Naive thymus-derived CD4-positive, alpha-beta T cell (primary cell): ENCODE measurements at regions of chr20 and their contacts with region 1.

Region 1: GRCh38 chr20:53660078-53660909 is 66.7 kb upstream of the ZNF217 start:
- DNase-seq: peak; percentile 11 to 54 (median 39)
- ATAC-seq: peak; percentile 36
- H3K4me3 ChIP-seq: peak overlapping the region; percentile 71
- H3K4me3 Mint-ChIP-seq: peak overlapping the region; percentile 69 to 92 (median 86)
- H3K27ac ChIP-seq: peak overlapping the region; percentile 74
- H3K27ac Mint-ChIP-seq: peak overlapping the region; percentile 79 to 96 (median 92)
- H3K4me1 ChIP-seq: peaks cover 12 to 32% of the 10 kb centered on the region in 2 donors
- H3K4me1 Mint-ChIP-seq: peaks cover 40 to 79% (median 70%) of the 10 kb centered on the region in 7 donors
- H3K27me3 ChIP-seq: no peaks in the 10 kb centered on the region
- H3K27me3 Mint-ChIP-seq: no peaks in the 10 kb centered on the region

Region 2: DNA sequence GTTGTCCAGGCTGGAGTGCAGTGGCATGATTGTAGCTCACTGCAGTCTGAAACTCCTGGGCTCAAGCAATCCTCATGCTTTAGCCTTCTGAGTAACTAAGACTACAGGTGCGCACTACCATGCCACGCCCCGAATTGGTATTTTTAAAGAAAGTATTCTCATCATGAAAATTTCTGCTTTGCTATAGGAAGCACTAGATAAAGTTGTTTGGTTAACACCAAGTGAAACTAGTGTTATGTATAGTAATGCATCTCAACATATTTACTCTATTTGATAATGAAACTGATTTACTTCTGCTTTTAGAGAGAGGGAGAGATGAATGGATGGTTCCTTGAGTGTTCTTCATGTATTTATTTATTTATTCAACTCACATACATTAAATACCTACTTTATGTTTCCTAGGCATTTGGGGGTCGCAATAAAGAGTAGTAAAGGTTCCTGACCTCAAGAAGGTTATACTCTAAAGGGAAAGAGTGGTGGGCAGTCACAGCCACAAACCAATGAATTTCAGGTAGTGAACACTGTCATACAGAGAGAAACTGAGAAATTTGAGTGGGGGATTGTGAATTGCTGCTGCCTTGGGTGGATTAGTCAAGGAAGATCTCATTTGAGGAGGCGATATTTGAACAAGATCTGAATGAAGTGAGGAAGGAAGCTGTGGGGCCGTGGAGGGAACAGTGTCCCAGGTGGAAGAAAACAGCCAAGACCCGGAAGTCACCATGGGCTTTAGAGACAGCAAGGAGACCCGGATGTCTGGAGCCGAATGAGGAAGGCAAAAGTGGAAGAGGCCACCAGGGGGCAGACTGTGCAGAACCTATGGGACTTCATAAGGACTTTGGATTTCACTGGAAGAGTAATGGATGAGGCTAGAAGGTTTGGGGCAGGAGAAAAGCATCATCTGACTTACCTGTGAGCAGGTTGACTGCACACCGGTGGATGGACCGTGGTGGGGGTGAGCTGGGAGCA is 502.6 kb before region 1 on chr20:
- CTCF ChIA-PET with region 1: no interaction called
- POLR2A ChIA-PET with region 1: no interaction called
- intact Hi-C with region 1: no loop called
- DNase-seq: peak in 2 of 9 donors; percentile 16 to 29
- ATAC-seq: peak; percentile 38
- H3K4me3 ChIP-seq: no peak overlapping the region
- H3K4me3 Mint-ChIP-seq: no peak overlapping the region
- H3K27ac ChIP-seq: no peak overlapping the region
- H3K27ac Mint-ChIP-seq: peak overlapping the region in 5 of 9 donors; percentile 14 to 44 (median 30)
- H3K4me1 ChIP-seq: no peaks in the 10 kb centered on the region
- H3K4me1 Mint-ChIP-seq: peaks cover 17 to 55% (median 46%) of the 10 kb centered on the region in 7 donors
- H3K27me3 ChIP-seq: no peaks in the 10 kb centered on the region
- H3K27me3 Mint-ChIP-seq: peaks cover 0 to 3% (median 0%) of the 10 kb centered on the region in 5 donors

Region 3: DNA sequence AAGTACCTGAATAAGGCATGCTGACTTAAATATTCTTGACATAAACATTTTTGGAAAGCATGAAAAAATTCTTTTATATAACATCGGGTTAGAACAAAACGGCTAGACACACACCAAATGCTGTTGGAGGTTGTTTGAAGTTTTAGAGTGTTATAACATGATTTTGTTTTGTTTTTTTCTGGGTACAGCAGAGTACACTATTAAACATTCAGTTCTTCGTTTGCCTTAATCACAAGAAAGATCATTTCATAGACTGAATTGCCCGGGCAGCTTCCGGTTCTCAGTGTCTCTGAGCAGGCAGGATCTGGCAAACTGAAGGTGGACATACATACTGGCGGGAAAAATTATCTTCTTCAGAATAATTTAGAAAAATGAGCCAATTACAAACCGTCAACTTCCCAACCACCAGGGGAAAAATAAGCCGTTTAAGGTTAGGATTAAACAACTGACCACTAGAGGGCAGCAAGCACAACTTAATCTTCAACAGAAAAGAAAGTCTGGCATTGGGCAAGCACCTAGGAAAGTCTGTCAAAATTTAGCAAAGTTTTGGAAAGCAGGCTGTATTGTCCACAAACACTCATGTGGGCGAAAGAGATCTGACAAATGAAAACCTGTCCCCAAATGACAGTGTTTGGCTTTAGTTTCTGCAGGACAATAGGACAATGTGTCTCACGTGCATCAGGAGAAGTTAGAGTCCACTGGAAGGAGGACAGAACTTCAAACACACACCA is 81.6 kb before region 1 on chr20:
- CTCF ChIA-PET with region 1: interaction called, 5 read pairs
- POLR2A ChIA-PET with region 1: interaction called, 5 read pairs
- intact Hi-C with region 1: loop called in 1 of 2 experiments (anchors 2 kb)
- DNase-seq: peak in 8 of 9 donors; percentile 44 to 85 (median 80)
- ATAC-seq: peak; percentile 85
- H3K4me3 ChIP-seq: peak overlapping the region; percentile 49
- H3K4me3 Mint-ChIP-seq: peak overlapping the region; percentile 79 to 98 (median 86)
- H3K27ac ChIP-seq: peak overlapping the region; percentile 70
- H3K27ac Mint-ChIP-seq: peak overlapping the region; percentile 83 to 98 (median 94)
- H3K4me1 ChIP-seq: peaks cover 53 to 60% of the 10 kb centered on the region in 2 donors
- H3K4me1 Mint-ChIP-seq: peaks cover 41 to 99% (median 91%) of the 10 kb centered on the region in 7 donors
- H3K27me3 ChIP-seq: no peaks in the 10 kb centered on the region
- H3K27me3 Mint-ChIP-seq: no peaks in the 10 kb centered on the region

Region 4: GRCh38 chr20:53611449-53611894 is 48.8 kb before region 1 on chr20:
- CTCF ChIA-PET with region 1: interaction called, 6 read pairs
- POLR2A ChIA-PET with region 1: interaction called, 25 read pairs
- intact Hi-C with region 1: loop called (anchors 1 to 2 kb)
- DNase-seq: peak in 1 of 9 donors; percentile 15
- ATAC-seq: no peak
- H3K4me3 ChIP-seq: no peak overlapping the region
- H3K4me3 Mint-ChIP-seq: no peak overlapping the region
- H3K27ac ChIP-seq: peak overlapping the region; percentile 35
- H3K27ac Mint-ChIP-seq: peak overlapping the region in 8 of 9 donors; percentile 48 to 81 (median 76)
- H3K4me1 ChIP-seq: peaks cover 12 to 22% of the 10 kb centered on the region in 2 donors
- H3K4me1 Mint-ChIP-seq: peaks cover 10 to 46% (median 37%) of the 10 kb centered on the region in 7 donors
- H3K27me3 ChIP-seq: no peaks in the 10 kb centered on the region
- H3K27me3 Mint-ChIP-seq: no peaks in the 10 kb centered on the region

Region 5: DNA sequence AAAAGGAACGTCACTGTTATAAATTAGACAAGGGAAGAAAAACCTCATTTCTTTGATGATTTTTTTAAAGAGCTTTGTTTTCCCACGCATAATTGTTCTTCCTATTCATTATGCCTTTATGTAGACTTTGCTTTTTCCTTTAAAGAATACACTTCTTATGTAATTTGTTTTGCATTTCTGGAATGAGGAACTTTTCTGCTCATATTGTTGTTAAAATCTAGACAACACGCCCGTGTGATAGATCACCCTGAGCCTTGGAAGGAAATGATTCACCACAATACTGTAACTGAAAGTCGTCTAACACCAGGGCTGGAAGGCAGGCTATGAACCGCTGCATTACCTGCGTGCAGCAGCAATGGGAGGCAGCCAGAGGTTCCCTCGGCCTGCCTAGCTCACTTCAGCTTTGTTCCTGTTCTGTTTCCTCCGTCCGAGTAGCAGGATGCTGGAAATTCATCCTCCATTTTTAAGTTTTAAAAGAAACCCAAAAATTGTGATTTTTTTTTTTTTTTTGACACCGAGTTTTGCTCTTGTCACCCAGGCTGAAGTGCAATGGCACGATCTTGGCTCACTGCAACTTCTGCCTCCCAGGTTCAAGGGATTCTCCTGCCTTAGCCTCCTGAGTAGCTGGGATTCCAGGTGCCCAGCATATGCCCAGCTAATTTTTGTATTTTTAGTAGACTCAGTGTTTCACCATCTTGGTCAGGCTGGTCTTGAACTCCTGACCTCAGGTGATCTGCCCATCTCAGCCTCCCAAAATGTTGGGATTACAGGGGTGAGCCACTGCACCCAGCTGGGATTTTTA is 17.1 kb before region 1 on chr20:
- CTCF ChIA-PET with region 1: interaction called, 3 read pairs
- POLR2A ChIA-PET with region 1: interaction called, 125 read pairs
- intact Hi-C with region 1: loop called in 1 of 2 experiments (anchors 2 kb)
- DNase-seq: peak in 8 of 9 donors; percentile 61 to 81 (median 75)
- ATAC-seq: peak; percentile 98
- H3K4me3 ChIP-seq: peak overlapping the region; percentile 56
- H3K4me3 Mint-ChIP-seq: peak overlapping the region; percentile 73 to 92 (median 85)
- H3K27ac ChIP-seq: peak overlapping the region; percentile 77
- H3K27ac Mint-ChIP-seq: peak overlapping the region; percentile 90 to 100 (median 97)
- H3K4me1 ChIP-seq: peaks cover 13 to 45% of the 10 kb centered on the region in 2 donors
- H3K4me1 Mint-ChIP-seq: peaks cover 30 to 64% (median 52%) of the 10 kb centered on the region in 7 donors
- H3K27me3 ChIP-seq: no peaks in the 10 kb centered on the region
- H3K27me3 Mint-ChIP-seq: no peaks in the 10 kb centered on the region

Region 6: DNA sequence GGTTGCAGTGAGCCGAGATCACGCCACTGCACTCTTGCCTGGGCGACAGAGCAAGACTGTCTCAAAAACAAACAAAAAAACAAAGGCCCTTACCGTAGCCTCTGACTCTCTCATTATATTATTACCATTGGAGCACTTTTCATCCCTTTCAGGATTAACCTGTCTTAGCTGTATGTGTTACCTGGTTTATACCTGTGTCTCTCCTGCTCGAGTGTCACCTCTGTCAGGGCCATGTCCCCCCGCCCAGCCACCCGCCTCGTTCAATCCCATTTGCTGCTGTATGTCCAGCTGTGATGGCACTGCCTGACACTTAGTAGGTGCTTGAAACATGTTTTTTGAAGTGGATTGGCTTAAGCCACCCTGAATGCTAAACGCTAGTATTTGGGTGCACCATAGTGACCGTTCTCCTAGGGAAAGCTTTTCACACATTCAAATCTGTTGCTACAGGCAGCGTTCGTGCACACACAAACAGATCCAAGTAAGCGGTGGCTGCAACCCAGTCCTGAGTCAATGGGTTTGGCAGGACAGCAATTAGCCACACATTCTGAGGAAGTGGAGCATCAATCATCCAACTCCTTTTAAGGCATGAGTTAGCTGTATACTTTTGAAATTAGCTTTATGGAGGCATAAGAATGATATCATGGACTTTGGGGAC is 32.2 kb after region 1 on chr20:
- CTCF ChIA-PET with region 1: interaction called, 9 read pairs
- POLR2A ChIA-PET with region 1: interaction called, 5 read pairs
- intact Hi-C with region 1: loop called in 1 of 2 experiments (anchors 2 kb)
- DNase-seq: no peak
- ATAC-seq: peak; percentile 61
- H3K4me3 ChIP-seq: no peak overlapping the region
- H3K4me3 Mint-ChIP-seq: peak overlapping the region; percentile 42 to 80 (median 72)
- H3K27ac ChIP-seq: no peak overlapping the region
- H3K27ac Mint-ChIP-seq: peak overlapping the region; percentile 38 to 92 (median 69)
- H3K4me1 ChIP-seq: peaks cover 8 to 10% of the 10 kb centered on the region in 2 donors
- H3K4me1 Mint-ChIP-seq: peaks cover 8 to 45% (median 30%) of the 10 kb centered on the region in 7 donors
- H3K27me3 ChIP-seq: no peaks in the 10 kb centered on the region
- H3K27me3 Mint-ChIP-seq: no peaks in the 10 kb centered on the region

Region 7: GRCh38 chr20:53915446-53916172 is 255.3 kb after region 1 on chr20:
- CTCF ChIA-PET with region 1: interaction called, 3 read pairs
- POLR2A ChIA-PET with region 1: no interaction called
- intact Hi-C with region 1: loop called (anchors 5 kb)
- DNase-seq: peak; percentile 70 to 90 (median 88)
- ATAC-seq: peak; percentile 99
- H3K4me3 ChIP-seq: peak overlapping the region; percentile 79
- H3K4me3 Mint-ChIP-seq: peak overlapping the region; percentile 88 to 97 (median 94)
- H3K27ac ChIP-seq: peak overlapping the region; percentile 70
- H3K27ac Mint-ChIP-seq: peak overlapping the region; percentile 82 to 95 (median 90)
- H3K4me1 ChIP-seq: peaks cover 5 to 7% of the 10 kb centered on the region in 2 donors
- H3K4me1 Mint-ChIP-seq: peaks cover 15 to 37% (median 23%) of the 10 kb centered on the region in 7 donors
- H3K27me3 ChIP-seq: no peaks in the 10 kb centered on the region
- H3K27me3 Mint-ChIP-seq: no peaks in the 10 kb centered on the region